ENCODE measurements at regions of chr7 and their contacts with region 1.

Region 1: DNA sequence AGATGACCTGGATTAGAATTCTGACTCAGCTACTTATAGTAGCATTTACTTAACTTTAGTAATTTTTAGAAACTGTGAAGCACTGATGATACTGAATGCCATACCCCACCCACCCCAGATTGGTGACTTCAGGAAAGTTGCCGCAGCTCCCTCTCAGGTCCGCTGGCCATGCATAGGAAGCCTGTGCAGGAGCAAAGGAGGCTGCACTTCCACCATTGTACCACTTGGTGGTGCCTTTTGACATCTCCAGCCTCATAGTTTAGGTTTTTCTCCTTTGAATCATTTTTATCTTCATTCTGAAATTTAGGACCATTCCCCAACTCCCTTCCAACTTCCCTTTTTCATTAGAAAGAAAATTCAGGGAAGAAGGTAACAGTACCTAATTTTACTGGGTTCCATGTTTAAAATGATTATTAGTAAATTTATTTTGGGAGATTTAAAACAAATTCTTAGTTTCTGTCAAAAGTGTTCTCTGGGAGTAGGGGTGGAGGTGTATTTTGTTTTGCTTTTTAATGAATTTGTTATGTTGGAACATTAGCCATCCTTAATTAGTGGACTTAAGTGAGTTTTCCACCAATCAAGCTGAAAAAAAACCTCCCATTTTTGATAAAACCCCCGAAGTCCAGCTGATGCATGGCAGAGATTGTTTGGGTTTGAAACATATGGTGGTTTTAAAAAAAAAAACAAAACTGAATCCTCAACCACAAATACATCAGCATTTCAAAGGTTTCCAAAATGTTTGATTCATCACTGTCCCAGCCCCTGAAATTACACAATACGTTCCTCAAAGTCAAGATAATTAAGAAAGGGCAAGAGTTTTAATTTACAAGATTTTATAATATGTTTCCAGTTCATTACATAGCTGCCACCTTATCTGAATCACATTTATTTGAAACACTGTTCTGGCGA is 109.6 kb downstream of the WNT2 start:
- DNase-seq: no peak
- ATAC-seq: peak in 3 of 4 donors; percentile 47 to 65 (median 57)
- H3K4me3 ChIP-seq: no peak overlapping the region
- H3K27ac ChIP-seq: no peak overlapping the region
- H3K4me1 ChIP-seq: no peaks in the 10 kb centered on the region
- H3K27me3 ChIP-seq: no peaks in the 10 kb centered on the region
- CTCF ChIP-seq: peak; percentile 69 to 88 (median 78)
- POLR2A ChIP-seq: no peak

Region 2: DNA sequence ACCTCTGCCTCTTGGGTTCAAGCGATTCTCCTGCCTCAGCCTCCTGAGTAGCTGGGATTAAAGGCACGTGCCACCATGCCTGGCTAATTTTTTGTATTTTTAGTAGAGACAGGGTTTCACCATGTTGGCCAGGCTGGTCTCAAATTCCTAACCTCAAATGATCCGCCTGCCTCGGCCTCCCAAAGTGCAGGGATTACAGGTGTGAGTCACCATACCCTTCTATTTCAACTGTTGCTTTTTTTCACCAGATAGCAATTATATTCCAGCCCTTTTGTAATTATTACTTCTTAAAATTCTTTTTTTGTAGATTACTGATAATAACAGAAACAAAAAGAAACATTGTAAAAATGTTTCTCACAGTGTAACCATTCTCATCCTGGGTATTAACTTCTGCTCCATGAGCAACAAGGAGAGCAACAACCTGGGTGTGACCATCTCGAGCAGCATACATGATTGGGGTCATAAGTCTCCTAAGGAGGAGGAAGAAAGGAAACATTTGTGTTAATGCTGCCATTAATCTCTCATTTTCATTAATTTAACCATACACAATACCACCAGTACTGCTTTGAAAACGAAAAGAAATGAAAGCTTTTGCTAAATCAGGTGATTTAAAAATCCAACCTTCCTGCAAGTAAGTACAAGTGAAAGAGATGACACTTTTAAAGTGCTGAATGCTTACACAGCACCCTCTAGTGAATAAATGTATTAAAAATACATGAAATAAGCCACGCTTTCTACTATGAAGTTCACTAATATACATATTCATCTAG is 172.3 kb after region 1 on chr7:
- intact Hi-C with region 1: loop called in 8 of 10 experiments (anchors 5 to 10 kb)
- DNase-seq: no peak
- ATAC-seq: no peak
- H3K4me3 ChIP-seq: no peak overlapping the region
- H3K27ac ChIP-seq: no peak overlapping the region
- H3K4me1 ChIP-seq: no peaks in the 10 kb centered on the region
- H3K27me3 ChIP-seq: no peaks in the 10 kb centered on the region
- CTCF ChIP-seq: peak in 10 of 12 donors; percentile 14 to 53 (median 38)
- POLR2A ChIP-seq: no peak

Region 3: DNA sequence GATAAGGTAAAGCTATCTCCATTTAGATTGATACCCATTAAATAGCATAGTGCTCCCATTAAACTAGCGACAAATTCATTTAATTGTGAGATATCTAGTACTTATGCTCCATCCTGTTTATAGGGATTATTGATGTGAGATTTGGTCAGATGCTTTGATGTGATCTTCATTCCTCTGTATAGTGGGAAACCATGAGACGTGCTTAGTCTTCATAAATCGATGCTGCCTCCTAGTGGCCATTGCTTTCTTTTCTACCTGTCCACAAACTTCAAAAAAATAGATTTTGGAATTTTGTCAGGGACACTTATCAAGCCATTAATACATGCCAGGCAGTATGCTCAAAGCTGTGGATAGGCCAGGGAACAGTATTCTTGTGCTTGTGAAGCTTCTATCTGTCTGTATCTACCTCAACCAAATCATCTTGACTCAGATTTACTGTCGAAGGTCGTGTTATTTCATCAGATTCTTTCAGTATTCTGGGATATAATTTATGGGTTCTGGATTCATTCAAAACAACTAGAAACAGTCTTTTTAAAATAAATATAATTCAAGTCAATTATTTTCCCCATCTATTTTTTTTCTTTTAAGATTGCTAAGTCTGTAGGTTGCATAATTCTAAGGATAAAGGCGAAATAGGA is 982.7 kb after region 1 on chr7:
- intact Hi-C with region 1: loop called in 1 of 10 experiments (anchors 10 kb)
- DNase-seq: peak in 2 of 5 donors; percentile 28 to 34
- ATAC-seq: peak in 2 of 4 donors; percentile 66 to 70
- H3K4me3 ChIP-seq: no peak overlapping the region
- H3K27ac ChIP-seq: no peak overlapping the region
- H3K4me1 ChIP-seq: no peaks in the 10 kb centered on the region
- H3K27me3 ChIP-seq: no peaks in the 10 kb centered on the region
- CTCF ChIP-seq: peak; percentile 55 to 78 (median 64)
- POLR2A ChIP-seq: no peak

Region 4: GRCh38 chr7:118288098-118288497 is 1074.9 kb after region 1 on chr7:
- intact Hi-C with region 1: no loop called
- DNase-seq: no peak
- ATAC-seq: no peak
- H3K4me3 ChIP-seq: no peak overlapping the region
- H3K27ac ChIP-seq: no peak overlapping the region
- H3K4me1 ChIP-seq: peaks cover 0 to 9% (median 0%) of the 10 kb centered on the region in 12 donors
- H3K27me3 ChIP-seq: peaks cover 0 to 74% (median 0%) of the 10 kb centered on the region in 9 donors
- CTCF ChIP-seq: no peak
- POLR2A ChIP-seq: no peak